Endothelial cell of umbilical vein (primary cell): ENCODE measurements at regions of chr10 and their contacts with region 1.

Region 1: GRCh38 chr10:97612386-97612785 is 20.9 kb downstream of the MORN4 start:
- DNase-seq: peak; percentile 71
- H3K4me3 ChIP-seq: no peak overlapping the region
- H3K27ac ChIP-seq: no peak overlapping the region
- H3K4me1 ChIP-seq: no peaks in the 10 kb centered on the region
- H3K27me3 ChIP-seq: no peaks in the 10 kb centered on the region
- CTCF ChIP-seq: peak in 1 of 2 donors; percentile 38
- POLR2A ChIP-seq: no peak

Region 2: DNA sequence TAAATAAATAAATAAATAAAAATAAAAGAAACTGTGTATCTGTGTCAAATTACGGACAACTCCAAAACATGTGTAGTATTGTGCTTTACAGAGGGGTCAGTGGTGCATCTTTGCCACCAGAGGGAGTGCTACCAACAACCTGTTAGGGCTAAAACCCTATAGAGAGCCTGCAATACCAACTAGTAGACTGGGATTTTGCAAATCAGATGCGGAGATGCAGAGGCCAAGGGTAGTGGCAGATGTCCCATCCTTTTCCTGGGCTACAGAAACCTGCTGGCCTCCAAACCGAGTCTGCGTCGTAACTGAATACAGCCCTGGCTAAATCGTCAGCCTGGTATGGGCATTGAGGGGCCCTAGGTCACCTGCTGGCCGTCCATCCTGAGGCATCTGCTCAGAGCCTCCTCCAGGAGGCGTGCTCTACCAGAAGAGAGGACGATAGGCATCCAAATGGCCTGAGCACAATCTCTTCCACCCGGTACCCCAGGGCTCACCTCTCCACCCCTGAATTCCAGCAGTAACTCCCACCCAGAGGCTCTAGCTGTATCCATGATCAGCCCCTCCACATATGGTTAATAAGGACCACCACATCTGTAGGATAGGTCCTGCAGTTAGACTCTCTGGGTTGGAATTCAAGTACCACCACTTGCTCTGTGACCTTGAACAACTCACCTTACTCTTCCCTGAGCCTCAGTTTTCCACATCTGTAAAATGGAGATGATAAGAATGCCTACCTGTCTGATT is 205.0 kb before region 1 on chr10:
- CTCF ChIA-PET with region 1: interaction called, 24 read pairs
- POLR2A ChIA-PET with region 1: no interaction called
- dilution Hi-C with region 1: no loop called
- intact Hi-C with region 1: loop called (anchors 1 kb)
- DNase-seq: peak; percentile 86
- H3K4me3 ChIP-seq: peak overlapping the region in 1 of 3 experiments; percentile 31
- H3K27ac ChIP-seq: no peak overlapping the region
- H3K4me1 ChIP-seq: no peaks in the 10 kb centered on the region
- H3K27me3 ChIP-seq: no peaks in the 10 kb centered on the region
- CTCF ChIP-seq: peak; percentile 59 to 76
- POLR2A ChIP-seq: no peak

Region 3: GRCh38 chr10:97463363-97464132 is 148.8 kb before region 1 on chr10:
- CTCF ChIA-PET with region 1: interaction called, 44 read pairs
- POLR2A ChIA-PET with region 1: no interaction called
- dilution Hi-C with region 1: no loop called
- intact Hi-C with region 1: loop called (anchors 1 kb)
- DNase-seq: peak; percentile 68
- H3K4me3 ChIP-seq: no peak overlapping the region
- H3K27ac ChIP-seq: no peak overlapping the region
- H3K4me1 ChIP-seq: peaks cover 3% of the 10 kb centered on the region
- H3K27me3 ChIP-seq: no peaks in the 10 kb centered on the region
- CTCF ChIP-seq: peak; percentile 75 to 76
- POLR2A ChIP-seq: no peak

Region 4: DNA sequence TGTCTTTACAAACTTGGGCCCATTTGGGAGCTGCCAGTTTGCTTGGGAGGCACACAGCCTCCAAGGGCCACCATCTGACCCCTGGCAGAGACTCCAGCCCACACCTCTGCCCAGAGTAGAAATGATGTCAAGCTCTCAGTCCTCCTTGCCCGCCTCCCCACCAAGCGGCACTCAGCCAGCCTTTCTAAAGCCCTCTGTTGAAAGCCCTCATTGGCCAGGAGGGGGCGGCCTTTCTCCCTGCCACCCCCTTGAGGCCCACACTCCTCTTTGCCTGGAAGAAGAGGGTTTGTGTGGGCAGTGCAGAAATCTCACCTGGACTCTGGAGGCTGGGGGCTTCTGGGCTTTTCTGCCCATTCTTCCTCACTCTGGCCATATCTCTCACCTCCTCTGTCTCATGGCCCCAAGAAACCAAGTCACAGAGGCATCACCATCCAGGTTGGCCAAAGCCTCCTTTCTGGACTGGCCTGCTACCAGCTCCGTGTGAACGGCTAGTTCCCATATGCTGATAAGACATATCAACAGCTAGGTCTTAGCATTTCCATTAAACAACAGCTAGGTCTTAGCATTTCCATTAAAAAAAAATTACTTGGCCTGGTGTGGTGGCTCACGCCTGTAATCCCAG is 77.5 kb before region 1 on chr10:
- CTCF ChIA-PET with region 1: interaction called, 45 read pairs
- POLR2A ChIA-PET with region 1: no interaction called
- dilution Hi-C with region 1: no loop called
- intact Hi-C with region 1: loop called (anchors 1 kb)
- DNase-seq: peak; percentile 55
- H3K4me3 ChIP-seq: no peak overlapping the region
- H3K27ac ChIP-seq: no peak overlapping the region
- H3K4me1 ChIP-seq: peaks cover 9% of the 10 kb centered on the region
- H3K27me3 ChIP-seq: no peaks in the 10 kb centered on the region
- CTCF ChIP-seq: peak; percentile 64 to 82
- POLR2A ChIP-seq: no peak

Region 5: GRCh38 chr10:97543025-97543575 is 69.3 kb before region 1 on chr10:
- CTCF ChIA-PET with region 1: interaction called, 11 read pairs
- POLR2A ChIA-PET with region 1: no interaction called
- dilution Hi-C with region 1: no loop called
- intact Hi-C with region 1: no loop called
- DNase-seq: peak; percentile 98
- H3K4me3 ChIP-seq: no peak overlapping the region
- H3K27ac ChIP-seq: peak overlapping the region; percentile 99
- H3K4me1 ChIP-seq: peaks cover 61% of the 10 kb centered on the region
- H3K27me3 ChIP-seq: no peaks in the 10 kb centered on the region
- CTCF ChIP-seq: no peak
- POLR2A ChIP-seq: peak; percentile 80

Region 6: DNA sequence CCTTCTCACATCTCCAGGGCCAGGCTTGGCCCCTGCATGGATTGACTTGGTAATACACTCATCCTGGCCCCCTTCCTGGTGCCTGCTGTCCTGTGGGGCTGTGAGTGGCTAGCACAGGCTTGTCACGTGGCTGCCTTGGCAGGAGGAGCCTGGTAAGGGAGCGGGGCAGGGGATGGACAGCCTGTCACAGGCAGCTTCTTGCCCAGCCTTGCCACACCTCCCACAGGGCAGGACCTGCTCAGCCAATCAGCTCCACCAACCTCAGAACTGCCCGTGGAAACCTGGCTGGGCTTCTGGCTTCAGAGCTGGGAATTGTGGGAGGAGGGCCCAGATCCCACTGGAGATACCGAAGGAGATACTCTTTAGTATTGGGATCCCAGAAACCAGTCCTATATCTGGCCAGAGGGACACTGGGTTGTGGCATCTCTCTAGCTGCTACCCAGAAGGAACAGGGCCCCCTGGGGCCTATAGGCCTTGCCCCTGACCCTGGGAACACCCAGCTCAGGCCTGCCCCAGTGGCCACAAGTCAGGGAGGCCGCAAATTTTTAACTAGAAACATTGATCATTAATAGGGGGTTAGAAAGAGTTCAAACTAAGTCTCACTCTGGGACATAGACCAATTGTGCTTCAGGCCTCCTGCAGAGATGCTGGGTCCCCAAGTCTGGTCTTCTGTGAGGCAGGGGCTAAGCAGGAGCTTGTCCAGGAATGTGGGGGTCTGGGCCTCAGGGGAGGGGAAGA is 28.2 kb before region 1 on chr10 and contains the start of gene HOGA1:
- CTCF ChIA-PET with region 1: interaction called, 11 read pairs
- POLR2A ChIA-PET with region 1: interaction called, 4 read pairs
- dilution Hi-C with region 1: no loop called
- intact Hi-C with region 1: no loop called
- DNase-seq: peak; percentile 47
- H3K4me3 ChIP-seq: no peak within 1 kb of the TSS
- H3K27ac ChIP-seq: no peak within 1 kb of the TSS
- H3K4me1 ChIP-seq: no peaks in the 10 kb centered on the region
- H3K27me3 ChIP-seq: no peaks in the 10 kb centered on the region
- CTCF ChIP-seq: no peak
- POLR2A ChIP-seq: no peak
- total RNA-seq, gene HOGA1: 0.46 and 0.91 TPM in 2 replicates